PC-3 (cell line): ENCODE measurements at regions of chr18 and their contacts with region 1.

Region 1: DNA sequence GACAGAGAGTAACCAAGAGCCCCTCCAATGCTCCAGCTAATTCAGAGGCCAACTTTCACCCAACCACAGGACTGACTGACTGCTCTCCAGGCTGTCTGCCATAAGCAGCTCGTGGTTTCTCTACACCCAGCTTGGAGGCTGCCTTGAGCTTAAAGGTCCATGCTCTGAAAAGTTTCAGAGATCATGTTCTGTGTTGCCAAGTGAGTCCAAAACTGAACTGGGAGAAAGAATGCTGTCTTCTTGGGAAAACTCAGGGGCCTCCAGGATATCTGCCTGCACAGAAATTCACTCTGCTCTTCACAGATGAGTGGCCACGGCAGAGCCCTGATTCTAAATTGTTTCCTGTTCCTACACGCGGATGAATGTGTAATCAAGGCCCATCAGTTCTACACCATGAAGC is 51.1 kb downstream of the LPIN2 start:
- DNase-seq: no peak
- ATAC-seq: no peak
- H3K4me3 ChIP-seq: no peak overlapping the region
- H3K27ac ChIP-seq: no peak overlapping the region
- H3K4me1 ChIP-seq: no peaks in the 10 kb centered on the region
- H3K27me3 ChIP-seq: no peaks in the 10 kb centered on the region
- CTCF ChIP-seq: no peak

Region 2: DNA sequence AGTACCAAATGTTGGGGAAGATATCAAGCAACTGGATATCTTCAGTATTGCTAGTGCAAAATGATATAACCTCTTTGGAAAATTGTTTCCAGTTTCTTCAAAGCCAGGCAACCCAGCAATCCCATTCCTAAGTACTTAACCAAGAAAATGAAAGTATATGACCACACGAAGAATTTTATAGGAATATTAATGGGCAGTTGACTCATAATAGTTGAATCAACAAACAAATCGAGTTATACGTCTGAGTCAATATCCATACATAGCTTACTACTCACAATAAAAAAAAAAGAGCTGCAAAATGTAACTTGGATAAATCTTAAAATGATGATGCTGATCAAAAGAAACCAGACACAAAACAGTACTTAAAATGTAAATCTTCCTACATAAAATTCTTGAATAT is 1200.9 kb before region 1 on chr18:
- CTCF ChIA-PET with region 1: interaction called, 10 read pairs
- POLR2A ChIA-PET with region 1: no interaction called
- intact Hi-C with region 1: no loop called
- DNase-seq: peak; percentile 85
- ATAC-seq: peak; percentile 94
- H3K4me3 ChIP-seq: no peak overlapping the region
- H3K27ac ChIP-seq: no peak overlapping the region
- H3K4me1 ChIP-seq: peaks cover 4% of the 10 kb centered on the region
- H3K27me3 ChIP-seq: peaks cover 14% of the 10 kb centered on the region
- CTCF ChIP-seq: no peak